PC-3 (cell line): ENCODE measurements at regions of chr7 and their contacts with region 1.

Region 1: GRCh38 chr7:143965280-143965679 is 10.6 kb downstream of the OR2F1 start:
- DNase-seq: no peak
- ATAC-seq: no peak
- H3K4me3 ChIP-seq: no peak overlapping the region
- H3K27ac ChIP-seq: no peak overlapping the region
- H3K4me1 ChIP-seq: 0 out of 2 replicates have a peak, but pooled peaks cover 5% of the 10 kb centered on the region
- H3K27me3 ChIP-seq: no peaks in the 10 kb centered on the region
- CTCF ChIP-seq: no peak

Region 2: GRCh38 chr7:142459551-142459963 is 1505.7 kb before region 1 on chr7:
- CTCF ChIA-PET with region 1: no interaction called
- POLR2A ChIA-PET with region 1: interaction called, 11 read pairs
- intact Hi-C with region 1: no loop called
- DNase-seq: peak; percentile 73
- ATAC-seq: peak; percentile 82
- H3K4me3 ChIP-seq: no peak overlapping the region
- H3K27ac ChIP-seq: no peak overlapping the region
- H3K4me1 ChIP-seq: peaks cover 25% of the 10 kb centered on the region
- H3K27me3 ChIP-seq: no peaks in the 10 kb centered on the region
- CTCF ChIP-seq: peak; percentile 83